ENCODE measurements at regions of chr4 and their contacts with region 1.

Region 1: GRCh38 chr4:88940506-88940905 is 116.5 kb downstream of the FAM13A start:
- DNase-seq: peak in 12 of 35 experiments; percentile 6 to 44 (median 12)
- ATAC-seq: peak; percentile 91 to 100 (median 94)
- H3K4me3 ChIP-seq: no peak overlapping the region
- H3K4me3 Mint-ChIP-seq: peak overlapping the region in 1 of 3 donors; percentile 70
- H3K27ac ChIP-seq: peak overlapping the region; percentile 32
- H3K27ac Mint-ChIP-seq: peak overlapping the region; percentile 30 to 68
- H3K4me1 ChIP-seq: peaks cover 9 to 34% of the 10 kb centered on the region in 2 experiments
- H3K4me1 Mint-ChIP-seq: peaks cover 28 to 50% (median 43%) of the 10 kb centered on the region in 3 donors
- H3K27me3 ChIP-seq: no peaks in the 10 kb centered on the region
- H3K27me3 Mint-ChIP-seq: no peaks in the 10 kb centered on the region

Region 2: DNA sequence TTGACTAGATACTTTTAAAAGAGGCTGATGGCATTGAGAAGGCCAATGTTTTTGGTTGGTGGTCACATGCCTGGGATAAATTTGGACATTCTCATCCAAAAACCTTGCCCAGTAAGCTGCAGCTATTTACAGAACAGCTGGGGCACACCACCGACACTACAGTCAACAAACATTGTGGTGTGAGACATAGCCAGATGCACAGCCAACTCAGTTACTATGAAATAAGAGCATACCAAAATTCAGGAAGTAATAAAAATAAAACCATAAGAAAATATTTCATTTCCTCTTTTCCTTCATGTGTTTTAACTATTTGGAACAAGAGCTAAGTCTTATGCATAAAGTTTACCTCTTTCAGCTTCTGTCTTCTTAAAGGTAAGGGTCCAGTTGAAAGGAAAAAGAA is 665.0 kb before region 1 on chr4:
- CTCF ChIA-PET with region 1: no interaction called
- POLR2A ChIA-PET with region 1: no interaction called
- DNase-seq: no peak
- ATAC-seq: no peak
- H3K4me3 ChIP-seq: no peak overlapping the region
- H3K4me3 Mint-ChIP-seq: no peak overlapping the region
- H3K27ac ChIP-seq: no peak overlapping the region
- H3K27ac Mint-ChIP-seq: no peak overlapping the region
- H3K4me1 ChIP-seq: peaks cover 0 to 11% of the 10 kb centered on the region in 2 experiments
- H3K4me1 Mint-ChIP-seq: peaks cover 52 to 61% (median 58%) of the 10 kb centered on the region in 3 donors
- H3K27me3 ChIP-seq: no peaks in the 10 kb centered on the region
- H3K27me3 Mint-ChIP-seq: no peaks in the 10 kb centered on the region

Region 3: GRCh38 chr4:88672987-88673386 is 267.5 kb before region 1 on chr4:
- CTCF ChIA-PET with region 1: no interaction called
- POLR2A ChIA-PET with region 1: no interaction called
- DNase-seq: peak in 23 of 35 experiments; percentile 6 to 52 (median 17)
- ATAC-seq: peak; percentile 40 to 76 (median 61)
- H3K4me3 ChIP-seq: no peak overlapping the region
- H3K4me3 Mint-ChIP-seq: no peak overlapping the region
- H3K27ac ChIP-seq: no peak overlapping the region
- H3K27ac Mint-ChIP-seq: no peak overlapping the region
- H3K4me1 ChIP-seq: no peaks in the 10 kb centered on the region
- H3K4me1 Mint-ChIP-seq: no peaks in the 10 kb centered on the region
- H3K27me3 ChIP-seq: no peaks in the 10 kb centered on the region
- H3K27me3 Mint-ChIP-seq: no peaks in the 10 kb centered on the region

Region 4: DNA sequence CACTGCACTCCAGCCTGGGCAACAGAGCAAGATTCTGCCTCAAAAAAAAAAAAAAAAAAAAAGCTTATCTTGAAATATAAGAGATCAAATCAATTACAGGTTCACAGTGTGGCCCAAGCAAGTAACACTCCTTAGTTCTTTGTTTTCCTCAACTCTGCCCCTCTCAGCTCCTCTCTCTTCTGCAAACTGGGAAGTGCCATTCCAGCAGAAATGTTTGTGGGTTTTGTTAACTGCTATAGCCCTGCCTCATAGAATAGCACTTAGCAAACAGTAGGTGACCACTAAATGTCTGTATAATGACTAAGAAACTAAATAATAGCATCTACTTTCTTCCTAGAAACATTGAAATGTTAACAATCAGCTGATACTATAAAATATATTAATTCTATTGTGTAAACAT is 82.9 kb before region 1 on chr4:
- CTCF ChIA-PET with region 1: no interaction called
- POLR2A ChIA-PET with region 1: interaction called in 1 of 2 experiments, 11 read pairs
- DNase-seq: no peak
- ATAC-seq: no peak
- H3K4me3 ChIP-seq: no peak overlapping the region
- H3K4me3 Mint-ChIP-seq: no peak overlapping the region
- H3K27ac ChIP-seq: no peak overlapping the region
- H3K27ac Mint-ChIP-seq: no peak overlapping the region
- H3K4me1 ChIP-seq: no peaks in the 10 kb centered on the region
- H3K4me1 Mint-ChIP-seq: peaks cover 0 to 9% (median 0%) of the 10 kb centered on the region in 3 donors
- H3K27me3 ChIP-seq: no peaks in the 10 kb centered on the region
- H3K27me3 Mint-ChIP-seq: peaks cover 0 to 3% of the 10 kb centered on the region in 2 donors